Dendritic cell treated with granulocyte-macrophage colony-stimulating factor and Interleukin-4, amounts not matched to agents 40 ng/mL and 50 ng/mL, for 4 days (primary cell): ENCODE measurements at regions of chr4 and their contacts with region 1.

Region 1: GRCh38 chr4:101347557-101348366 is 436 bp upstream of the PPP3CA start:
- H3K4me3 Mint-ChIP-seq: peak overlapping the region; percentile 86
- H3K27ac Mint-ChIP-seq: peak overlapping the region; percentile 94
- H3K4me1 Mint-ChIP-seq: peaks cover 46% of the 10 kb centered on the region
- H3K27me3 Mint-ChIP-seq: peaks cover 8% of the 10 kb centered on the region

Region 2: DNA sequence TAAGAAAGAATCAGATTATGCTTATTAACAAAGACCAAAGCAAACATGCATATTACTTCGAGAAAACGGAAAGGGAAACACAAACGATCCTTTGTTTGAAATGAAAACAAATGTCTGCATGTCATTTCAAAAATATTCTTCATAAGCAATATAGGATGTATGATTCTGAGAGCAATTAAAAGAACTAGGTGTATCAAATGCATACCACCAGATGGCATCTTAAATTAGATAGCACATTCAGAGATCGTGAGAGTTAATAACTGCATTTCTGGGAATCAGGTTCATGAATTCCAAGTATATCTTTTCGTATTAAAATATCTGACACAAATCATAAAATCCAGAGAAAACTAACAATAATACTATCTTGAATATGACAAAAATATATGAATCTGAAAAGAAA is 159.9 kb before region 1 on chr4:
- intact Hi-C with region 1: loop called (anchors 5 kb)
- H3K4me3 Mint-ChIP-seq: no peak overlapping the region
- H3K27ac Mint-ChIP-seq: no peak overlapping the region
- H3K4me1 Mint-ChIP-seq: peaks cover 25% of the 10 kb centered on the region
- H3K27me3 Mint-ChIP-seq: no peaks in the 10 kb centered on the region

Region 3: GRCh38 chr4:101262683-101263082 is 85.1 kb before region 1 on chr4:
- intact Hi-C with region 1: no loop called
- H3K4me3 Mint-ChIP-seq: no peak overlapping the region
- H3K27ac Mint-ChIP-seq: no peak overlapping the region
- H3K4me1 Mint-ChIP-seq: peaks cover 30% of the 10 kb centered on the region
- H3K27me3 Mint-ChIP-seq: no peaks in the 10 kb centered on the region

Region 4: DNA sequence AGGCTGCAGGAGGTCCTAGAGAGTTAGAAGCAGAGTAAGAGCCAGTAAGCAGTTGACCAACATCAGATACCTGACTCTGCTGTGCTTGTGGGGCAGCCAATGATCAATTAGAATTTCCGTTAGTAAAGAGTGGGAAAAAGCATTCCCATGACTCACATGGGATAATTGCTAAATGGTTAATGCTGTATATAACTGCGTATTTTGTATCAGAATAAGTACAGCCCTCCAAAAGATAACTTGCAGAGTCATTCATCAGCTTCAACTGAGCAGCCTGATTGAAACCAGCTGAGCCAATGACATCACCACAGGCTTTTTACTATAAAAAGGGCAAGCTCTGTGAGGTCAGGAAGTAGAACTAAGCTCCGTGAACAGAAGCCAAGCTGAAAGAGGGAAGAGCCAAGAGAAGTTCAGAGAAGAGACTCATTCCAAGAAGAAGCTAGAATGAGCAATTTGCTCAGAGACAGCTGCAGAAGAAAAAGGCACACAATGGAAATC is 68.3 kb before region 1 on chr4:
- intact Hi-C with region 1: loop called (anchors 5 kb)
- H3K4me3 Mint-ChIP-seq: peak overlapping the region; percentile 53
- H3K27ac Mint-ChIP-seq: peak overlapping the region; percentile 71
- H3K4me1 Mint-ChIP-seq: peaks cover 46% of the 10 kb centered on the region
- H3K27me3 Mint-ChIP-seq: no peaks in the 10 kb centered on the region

Region 5: DNA sequence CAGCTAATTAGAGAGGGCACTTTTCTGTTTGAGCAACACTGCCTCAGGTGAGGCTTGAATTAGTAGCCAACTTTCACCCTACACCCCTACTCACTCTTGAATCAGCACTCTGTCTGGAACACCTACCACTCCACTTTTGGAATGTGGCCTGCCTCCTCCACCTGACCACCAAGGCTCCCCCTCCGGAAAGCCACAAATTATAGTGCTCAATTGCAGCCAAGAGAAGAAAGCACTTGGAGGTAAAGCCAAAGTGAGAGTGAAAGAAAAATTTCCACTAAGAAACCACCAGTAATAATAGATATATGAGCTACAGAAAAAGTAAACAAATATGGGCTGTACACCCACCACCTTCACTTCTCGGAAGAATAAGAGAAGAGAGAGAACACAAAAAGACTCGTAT is 41.5 kb before region 1 on chr4:
- intact Hi-C with region 1: no loop called
- H3K4me3 Mint-ChIP-seq: no peak overlapping the region
- H3K27ac Mint-ChIP-seq: no peak overlapping the region
- H3K4me1 Mint-ChIP-seq: peaks cover 10% of the 10 kb centered on the region
- H3K27me3 Mint-ChIP-seq: no peaks in the 10 kb centered on the region

Region 6: DNA sequence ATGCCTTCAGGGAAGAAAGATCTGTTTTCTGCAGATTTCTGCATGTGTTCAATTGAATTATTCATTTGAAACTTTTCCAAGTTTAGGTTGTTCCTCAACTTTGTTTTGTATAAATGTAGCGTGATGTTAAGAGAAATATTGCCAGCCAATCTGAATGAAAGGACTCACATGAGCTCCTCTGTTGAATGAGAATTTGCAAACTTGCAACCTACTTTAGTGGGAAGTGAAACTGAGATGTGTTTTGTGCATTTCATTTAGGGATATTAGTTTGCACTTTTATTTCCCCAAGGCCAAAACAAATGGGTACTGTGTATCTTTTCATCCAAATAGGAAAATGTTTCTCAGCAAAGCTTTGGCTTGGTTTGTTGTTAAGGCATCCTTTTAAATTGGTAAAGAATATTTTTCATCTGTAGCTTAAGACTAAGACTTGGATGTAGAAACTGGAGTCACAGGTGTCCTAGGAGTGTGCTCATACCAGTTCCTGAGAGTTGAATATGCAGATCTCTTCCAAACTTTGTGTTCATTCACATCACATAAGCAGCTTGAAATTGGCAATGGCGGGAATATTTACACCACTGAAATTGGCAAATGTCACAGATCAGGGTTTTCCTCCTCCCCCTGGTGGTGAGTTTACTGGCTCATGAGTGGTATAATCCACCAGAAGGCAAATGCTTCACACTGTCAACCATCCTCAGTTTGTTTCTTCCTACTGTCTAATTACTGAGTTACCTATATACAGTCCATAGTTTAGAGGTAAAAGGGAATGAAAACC is 249.2 kb after region 1 on chr4:
- intact Hi-C with region 1: loop called (anchors 10 kb)
- H3K4me3 Mint-ChIP-seq: no peak overlapping the region
- H3K27ac Mint-ChIP-seq: peak overlapping the region; percentile 74
- H3K4me1 Mint-ChIP-seq: peaks cover 13% of the 10 kb centered on the region
- H3K27me3 Mint-ChIP-seq: no peaks in the 10 kb centered on the region

Region 7: DNA sequence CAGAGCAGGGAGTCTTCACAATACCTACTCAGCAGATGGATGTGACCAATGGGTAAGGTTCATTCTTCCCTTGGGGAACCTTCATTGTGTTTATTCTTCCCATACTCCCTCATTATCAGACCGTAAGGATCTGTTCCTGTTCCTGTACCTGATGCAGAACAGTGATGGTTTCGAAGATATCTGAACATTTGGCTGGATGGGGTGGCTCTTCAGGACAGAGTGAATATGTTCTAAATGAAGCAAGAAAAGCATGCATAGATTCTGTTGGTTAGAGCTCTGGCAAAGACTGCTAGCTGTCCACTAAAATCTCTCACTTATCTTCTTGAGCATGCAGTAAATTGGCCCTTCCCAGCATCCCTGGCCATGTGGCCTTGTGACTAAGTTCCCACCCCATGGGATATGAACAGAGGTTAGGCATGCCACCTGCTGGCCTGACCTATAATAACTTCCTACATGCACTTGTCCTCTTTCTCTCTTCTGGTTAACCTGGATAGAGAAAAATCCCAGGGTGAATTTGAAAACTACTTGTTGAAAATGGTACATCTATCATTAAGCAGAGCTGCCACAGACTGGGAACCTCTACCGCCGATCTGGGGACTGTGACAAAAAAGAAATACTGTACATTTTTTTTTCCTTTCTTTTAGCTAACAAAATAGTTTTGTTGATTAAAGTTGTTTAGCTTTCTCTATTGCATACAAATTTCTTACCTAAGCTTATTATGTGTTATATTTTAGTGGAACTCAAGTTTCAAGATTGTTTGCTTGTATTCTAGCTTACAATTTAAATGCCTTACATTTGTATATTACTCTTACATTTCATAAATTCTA is 382.7 kb after region 1 on chr4:
- intact Hi-C with region 1: loop called (anchors 5 kb)
- H3K4me3 Mint-ChIP-seq: no peak overlapping the region
- H3K27ac Mint-ChIP-seq: no peak overlapping the region
- H3K4me1 Mint-ChIP-seq: no peaks in the 10 kb centered on the region
- H3K27me3 Mint-ChIP-seq: no peaks in the 10 kb centered on the region

Region 8: DNA sequence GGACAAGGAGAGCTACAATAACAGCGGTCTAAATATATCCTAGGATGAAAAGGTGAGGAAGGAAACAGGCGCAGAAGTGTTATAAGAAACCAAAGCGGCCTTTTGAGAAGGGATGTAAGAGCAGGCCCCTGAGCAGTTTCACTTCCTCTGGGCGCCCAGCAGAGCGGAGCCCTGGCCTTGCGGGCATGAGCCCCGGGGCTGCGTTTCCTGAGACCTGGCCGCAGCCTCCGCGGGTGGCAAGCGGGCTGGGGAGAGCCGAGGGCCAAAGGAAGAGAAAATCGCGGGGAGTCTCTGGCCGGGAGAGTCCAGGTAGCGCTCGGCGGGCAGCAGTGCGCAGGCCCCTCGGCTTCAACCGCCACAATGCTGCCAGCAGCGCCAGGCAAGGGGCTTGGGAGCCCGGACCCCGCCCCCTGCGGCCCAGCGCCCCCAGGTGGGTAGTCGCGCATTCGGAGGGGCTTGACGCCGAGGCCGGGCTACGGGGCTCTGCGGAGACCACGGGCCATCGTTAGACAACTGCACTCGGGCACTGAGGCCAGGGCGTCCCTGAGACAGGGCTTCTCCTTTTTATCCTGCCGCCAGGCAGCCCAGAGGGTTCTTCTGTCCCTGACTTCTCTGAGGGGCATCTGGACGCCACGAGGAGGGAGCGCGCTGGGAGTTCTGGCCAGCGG is 442.9 kb after region 1 on chr4 and contains the start of gene BANK1:
- intact Hi-C with region 1: loop called (anchors 10 kb)
- H3K4me3 Mint-ChIP-seq: peak within 1 kb of the TSS; percentile 87
- H3K27ac Mint-ChIP-seq: peak within 1 kb of the TSS; percentile 86
- H3K4me1 Mint-ChIP-seq: peaks cover 18% of the 10 kb centered on the region
- H3K27me3 Mint-ChIP-seq: no peaks in the 10 kb centered on the region